G401 (cell line): ENCODE measurements at regions of chr2 and their contacts with region 1.

Region 1: GRCh38 chr2:85707304-85707703 is 13.1 kb downstream of the GNLY start:
- DNase-seq: peak; percentile 79

Region 2: DNA sequence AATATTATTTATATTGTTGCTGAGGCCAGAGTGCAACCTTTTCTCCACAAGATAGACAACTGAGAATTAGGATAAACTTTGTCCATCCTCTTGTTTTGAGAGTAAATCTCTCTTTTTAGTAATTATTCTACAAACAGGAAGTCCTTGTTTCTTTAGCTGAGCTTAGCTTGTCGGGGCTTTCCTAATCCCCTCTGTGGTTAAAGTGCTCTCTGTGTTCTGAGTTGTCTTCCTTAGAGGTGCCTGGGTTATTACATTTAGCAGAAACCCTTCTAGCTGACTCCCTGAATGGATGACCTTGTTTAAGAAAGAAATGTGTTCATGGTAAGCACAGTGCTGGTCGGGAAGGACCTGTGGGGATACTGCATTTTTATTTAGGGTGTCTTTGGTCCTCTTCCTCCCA is 78.6 kb before region 1 on chr2:
- in situ Hi-C with region 1: no loop called
- DNase-seq: no peak

Region 3: GRCh38 chr2:85655961-85656417 is 51.3 kb before region 1 on chr2:
- in situ Hi-C with region 1: loop called (anchors 5 kb)
- DNase-seq: no peak

Region 4: GRCh38 chr2:85741833-85742455 is 34.6 kb after region 1 on chr2:
- in situ Hi-C with region 1: no loop called
- DNase-seq: peak; percentile 25

Region 5: DNA sequence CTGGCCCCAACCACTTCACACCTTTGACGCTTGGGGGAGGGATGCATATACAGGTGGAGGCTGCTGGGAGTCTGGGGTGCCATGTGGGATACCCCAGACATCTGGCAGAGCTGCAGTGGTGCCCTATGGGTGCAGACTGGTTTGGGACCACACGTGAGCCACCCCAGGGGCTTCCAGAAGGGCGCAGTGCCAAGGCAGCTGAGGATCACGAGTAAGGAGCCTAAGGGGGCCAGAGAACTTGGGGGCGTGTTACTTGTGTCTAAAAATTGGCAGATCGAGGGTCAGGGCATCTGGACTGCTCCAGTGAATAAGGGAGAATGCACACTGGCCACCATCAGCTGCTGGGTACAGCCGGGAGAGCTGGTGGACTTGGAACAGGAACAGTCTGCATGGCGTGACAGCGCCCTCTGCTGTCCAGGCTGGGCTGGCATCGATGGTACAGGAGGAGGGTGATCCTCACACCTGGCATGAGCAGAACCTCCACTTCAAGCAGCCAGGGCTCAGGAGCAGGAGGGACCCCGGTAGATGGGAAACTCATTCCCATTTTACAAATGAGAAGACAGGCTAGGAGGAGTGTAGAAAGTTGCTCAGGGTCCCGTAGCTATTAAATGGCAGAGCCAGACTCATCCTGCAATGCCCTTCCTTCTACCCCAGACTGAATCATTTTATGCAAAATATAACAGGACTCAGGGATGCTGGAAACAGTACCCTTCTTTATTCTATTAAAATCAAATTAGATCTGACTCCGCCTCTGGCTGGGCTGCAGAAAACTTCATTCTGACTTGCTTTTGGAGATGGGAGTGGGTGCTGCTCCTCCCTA is 106.9 kb after region 1 on chr2:
- in situ Hi-C with region 1: loop called (anchors 25 kb)
- DNase-seq: peak; percentile 91